ENCODE measurements at regions of chr1 and their contacts with region 1.

Region 1: GRCh38 chr1:187655175-187655574 is 826.4 kb downstream of the PLA2G4A start:
- DNase-seq: peak; percentile 64
- H3K4me3 Mint-ChIP-seq: no peak overlapping the region
- H3K27ac Mint-ChIP-seq: no peak overlapping the region
- H3K4me1 Mint-ChIP-seq: peaks cover 8% of the 10 kb centered on the region
- H3K27me3 Mint-ChIP-seq: no peaks in the 10 kb centered on the region
- CTCF ChIP-seq: no peak

Region 2: GRCh38 chr1:187691439-187691838 is 36.3 kb after region 1 on chr1:
- CTCF ChIA-PET with region 1: interaction called, 3 read pairs
- POLR2A ChIA-PET with region 1: no interaction called
- intact Hi-C with region 1: loop called (anchors 1 kb)
- DNase-seq: peak; percentile 98
- H3K4me3 Mint-ChIP-seq: no peak overlapping the region
- H3K27ac Mint-ChIP-seq: peak overlapping the region; percentile 24
- H3K4me1 Mint-ChIP-seq: peaks cover 54% of the 10 kb centered on the region
- H3K27me3 Mint-ChIP-seq: no peaks in the 10 kb centered on the region
- CTCF ChIP-seq: no peak